Posterior vena cava (tissue), 2 donors: ENCODE measurements at regions of chr21 and their contacts with region 1.

Region 1: GRCh38 chr21:32966120-32966519 is 59.6 kb upstream of the OLIG2 start:
- DNase-seq: no peak

Region 2: DNA sequence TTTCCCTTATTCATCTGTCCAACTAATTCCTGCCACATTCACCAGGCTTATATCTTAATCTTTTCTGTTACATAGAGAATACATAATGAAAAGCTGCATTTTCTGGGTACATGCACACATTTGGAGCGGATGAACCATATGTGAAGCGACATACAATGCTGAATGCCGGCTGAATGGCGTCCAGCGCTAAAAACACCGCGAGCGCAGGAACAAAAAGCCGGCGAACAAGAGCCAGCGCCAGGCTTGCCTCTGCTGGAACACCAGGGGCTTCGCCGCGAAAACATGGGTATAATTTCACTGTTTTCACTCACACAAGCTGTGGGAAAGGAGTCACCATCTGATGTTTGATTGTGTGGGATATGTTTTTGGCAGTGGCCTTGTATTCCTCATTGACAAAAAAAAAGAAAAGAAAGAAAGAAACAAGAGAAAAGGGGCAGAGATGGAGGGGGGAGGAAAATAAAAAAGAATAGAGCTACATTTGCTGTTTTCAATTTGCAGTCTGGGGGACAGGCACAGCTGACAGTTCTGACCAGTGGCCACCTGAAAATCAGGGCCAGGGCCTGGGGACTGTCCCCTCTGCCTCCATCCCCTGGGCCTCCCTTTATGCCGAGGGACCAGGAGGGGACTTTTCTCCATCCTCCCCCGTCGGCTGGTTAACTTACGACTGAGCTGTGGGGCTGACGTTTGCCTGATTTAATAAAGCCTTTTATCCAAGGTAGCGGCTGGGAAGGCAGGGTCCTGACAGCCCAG is 10.6 kb before region 1 on chr21:
- intact Hi-C with region 1: no loop called
- DNase-seq: no peak

Region 3: DNA sequence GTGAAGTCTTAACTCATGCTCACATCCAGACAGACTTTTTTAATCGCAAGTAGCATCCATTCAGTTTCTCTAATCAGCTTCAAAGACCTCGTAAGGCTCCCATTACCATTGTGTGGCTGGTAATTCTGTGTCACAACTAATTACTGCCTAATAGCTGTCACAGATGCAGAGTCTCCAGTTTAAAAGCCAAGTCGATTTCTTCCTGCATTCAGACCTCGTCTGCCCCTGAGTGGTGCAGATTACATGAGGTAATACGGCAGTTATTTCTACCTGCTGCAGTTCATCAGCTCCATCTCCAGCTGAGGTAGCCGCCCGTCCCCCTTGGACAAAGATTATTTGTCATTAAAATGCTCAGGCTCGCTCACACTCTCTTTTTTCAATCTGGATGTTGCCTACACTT is 25.2 kb after region 1 on chr21:
- intact Hi-C with region 1: loop called in 1 of 2 experiments (anchors 2 kb)
- DNase-seq: no peak